ENCODE measurements at regions of chr20 and their contacts with region 1.

Region 1: DNA sequence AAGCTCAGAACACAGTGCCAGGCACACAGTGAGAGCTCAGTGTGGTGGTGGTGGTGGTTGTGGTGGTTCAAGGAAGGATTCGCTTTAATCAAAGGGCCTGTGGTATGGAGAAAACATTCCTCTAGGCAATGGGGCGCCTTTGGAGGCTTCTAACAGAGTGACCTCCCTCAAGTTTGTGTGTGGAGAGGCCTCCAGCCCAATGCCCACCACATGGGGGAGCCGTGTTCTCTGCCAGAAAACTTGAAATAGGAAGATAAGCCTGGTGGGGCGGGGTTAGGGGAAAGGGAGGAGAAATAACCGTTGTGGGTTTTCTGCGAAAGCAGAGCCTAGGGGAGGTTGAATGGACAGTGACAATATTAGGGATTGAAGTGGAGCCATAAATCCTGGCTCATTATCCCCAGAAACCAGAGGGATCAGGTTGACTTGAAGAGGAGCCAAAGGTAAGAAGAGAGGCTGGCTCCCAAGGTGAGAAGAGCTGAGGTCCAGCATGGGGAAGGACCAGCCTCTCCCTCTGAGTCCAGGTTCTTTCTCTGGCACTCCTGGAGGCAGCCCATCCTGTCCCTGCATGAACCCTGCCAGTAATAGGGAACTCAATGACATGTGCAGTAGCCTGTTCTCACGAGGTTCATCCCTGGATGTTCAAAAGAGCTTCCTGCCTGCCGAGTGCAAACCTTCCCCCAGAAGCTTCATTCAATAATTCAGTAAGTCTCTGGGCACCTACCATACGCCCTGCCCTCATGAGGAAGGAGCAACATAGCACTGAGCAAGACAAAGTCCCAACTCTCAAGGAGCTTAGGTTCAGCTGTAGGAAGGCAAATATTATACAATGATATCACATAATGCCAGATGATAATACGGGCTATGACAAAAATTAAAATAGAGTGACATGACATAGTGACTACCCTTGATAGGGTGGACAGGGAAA is 51.4 kb downstream of the TGM2 start:
- DNase-seq: peak; percentile 80 to 96 (median 84)
- ATAC-seq: peak; percentile 96
- H3K4me3 ChIP-seq: no peak overlapping the region
- H3K27ac ChIP-seq: peak overlapping the region; percentile 59
- H3K4me1 ChIP-seq: peaks cover 15 to 36% of the 10 kb centered on the region in 2 experiments
- H3K27me3 ChIP-seq: no peaks in the 10 kb centered on the region
- CTCF ChIP-seq: peak; percentile 86 to 90 (median 88)
- EP300 ChIP-seq: peak; percentile 75
- POLR2A ChIP-seq: 0 out of 2 replicates have a peak, but pooled peaks have one; percentile 27
- RAD21 ChIP-seq: peak; percentile 89 to 95

Region 2: DNA sequence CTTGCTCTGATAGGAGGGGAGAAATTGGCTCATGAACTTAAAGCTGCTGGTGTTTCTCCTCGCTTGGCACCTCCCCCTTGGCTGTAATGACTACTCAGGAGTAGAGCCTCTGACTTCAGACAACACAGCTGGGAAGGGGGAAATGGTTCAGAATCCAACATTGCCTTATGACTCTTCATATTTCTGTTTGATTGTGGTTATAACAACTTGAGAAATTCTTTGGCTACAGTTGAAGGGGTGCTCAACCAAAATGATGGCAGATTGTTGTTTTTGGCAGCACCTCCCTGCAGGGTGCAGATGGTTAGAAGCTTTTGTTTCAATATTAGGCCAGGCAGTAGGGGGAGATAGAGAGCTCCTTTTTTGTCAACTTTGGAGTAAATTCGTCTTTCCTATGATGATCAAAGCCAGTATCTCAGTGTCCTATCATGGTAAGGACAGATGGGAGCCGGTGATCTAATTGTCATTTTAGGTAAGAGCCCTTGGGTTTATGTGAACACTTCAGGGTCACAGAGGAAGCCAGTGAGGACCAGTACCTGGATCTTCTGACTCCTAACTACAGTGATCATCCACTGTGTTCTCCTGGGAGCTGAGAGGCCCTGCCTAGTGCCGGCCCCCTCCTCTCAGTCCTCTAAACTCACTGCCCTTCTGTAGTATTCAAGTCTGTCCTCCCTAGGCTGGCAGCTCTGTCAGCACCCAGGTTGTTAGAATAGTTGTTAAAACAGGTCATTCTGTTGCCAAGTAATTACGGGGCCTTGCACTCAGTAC is 40.2 kb before region 1 on chr20:
- CTCF ChIA-PET with region 1: interaction called, 3 read pairs
- POLR2A ChIA-PET with region 1: interaction called, 3 read pairs
- in situ Hi-C with region 1: no loop called
- intact Hi-C with region 1: loop called (anchors 5 kb)
- DNase-seq: peak; percentile 60 to 76 (median 62)
- ATAC-seq: peak; percentile 93
- H3K4me3 ChIP-seq: no peak overlapping the region
- H3K27ac ChIP-seq: no peak overlapping the region
- H3K4me1 ChIP-seq: peaks cover 0 to 14% of the 10 kb centered on the region in 2 experiments; a peak in 2 of 5 replicates
- H3K27me3 ChIP-seq: no peaks in the 10 kb centered on the region
- CTCF ChIP-seq: peak; percentile 77 to 83 (median 83)
- EP300 ChIP-seq: no peak
- POLR2A ChIP-seq: no peak
- RAD21 ChIP-seq: peak; percentile 69 to 84

Measured in K562 (cell line).